B cell (primary cell): ENCODE measurements at regions of chr22 and their contacts with region 1.

Region 1: DNA sequence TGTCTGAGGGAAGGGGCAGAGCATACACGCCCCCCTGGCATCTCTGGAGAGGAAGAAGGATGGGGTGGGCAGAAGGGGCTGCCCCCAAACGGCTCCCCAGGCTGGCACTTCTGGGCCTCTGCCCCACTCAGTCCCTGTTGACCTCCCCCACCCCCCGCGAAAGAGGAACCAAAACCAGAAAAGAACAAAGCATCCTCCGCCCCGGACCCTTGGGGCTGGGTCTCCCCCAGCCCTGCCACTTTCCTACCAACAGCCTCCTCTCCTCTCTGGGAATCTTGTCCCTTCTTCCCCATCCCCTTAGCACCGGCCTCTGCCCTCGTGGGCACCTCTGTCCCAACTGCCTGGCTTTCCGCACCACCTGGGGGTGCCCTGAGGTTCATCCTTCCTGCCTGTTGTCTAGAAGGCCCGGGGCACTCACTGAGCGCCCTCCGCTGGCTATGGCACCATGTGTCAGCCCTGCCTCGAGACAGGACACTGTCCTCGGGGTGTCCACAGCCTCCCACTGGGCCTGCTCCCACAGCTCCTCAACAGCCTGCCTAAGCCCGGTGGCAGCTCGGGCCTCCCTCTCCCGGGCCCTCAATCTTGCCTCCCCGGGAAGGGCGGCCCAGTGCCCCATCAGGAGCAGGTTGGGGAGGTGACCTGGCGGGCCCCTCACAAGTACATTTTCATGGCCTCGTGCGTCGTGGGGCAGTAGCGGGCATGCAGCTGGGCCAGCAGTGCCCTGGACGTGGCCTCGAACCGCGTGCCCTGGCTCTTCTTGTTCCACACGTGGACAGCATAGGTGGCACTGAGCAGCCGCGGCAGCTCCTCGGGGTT is 28.2 kb downstream of the A4GALT start:
- DNase-seq: peak; percentile 77
- ATAC-seq: peak; percentile 86
- H3K4me3 ChIP-seq: peak overlapping the region in 3 of 5 experiments; percentile 15 to 36 (median 28)
- H3K4me3 Mint-ChIP-seq: peak overlapping the region; percentile 83
- H3K27ac ChIP-seq: peak overlapping the region in 1 of 2 donors; percentile 34
- H3K27ac Mint-ChIP-seq: peak overlapping the region; percentile 91
- H3K4me1 ChIP-seq: peaks cover 22 to 32% of the 10 kb centered on the region in 2 donors
- H3K4me1 Mint-ChIP-seq: peaks cover 32% of the 10 kb centered on the region
- H3K27me3 ChIP-seq: no peaks in the 10 kb centered on the region
- H3K27me3 Mint-ChIP-seq: no peaks in the 10 kb centered on the region
- CTCF ChIP-seq: peak; percentile 32

Region 2: DNA sequence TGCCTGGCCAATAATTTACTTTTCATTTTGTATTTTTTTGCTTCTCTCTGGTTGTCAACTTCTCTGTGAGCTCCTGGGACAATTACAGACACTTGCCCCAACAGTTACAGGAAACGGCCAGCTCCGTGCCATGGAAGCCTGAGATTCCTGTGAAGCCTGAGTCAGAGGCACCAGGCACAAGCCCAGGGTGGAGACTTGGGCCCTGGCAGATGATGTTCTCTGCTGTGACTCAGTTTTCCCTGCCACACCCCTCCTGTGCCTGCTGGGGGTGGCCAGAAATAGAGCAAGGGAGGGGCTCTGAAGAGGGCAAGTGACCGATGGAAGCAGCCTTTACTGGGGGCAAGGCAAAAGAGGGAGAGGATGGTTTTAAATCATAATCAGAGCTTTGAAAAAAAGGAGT is 56.9 kb before region 1 on chr22:
- CTCF ChIA-PET with region 1: no interaction called
- POLR2A ChIA-PET with region 1: interaction called, 10 read pairs
- intact Hi-C with region 1: no loop called
- DNase-seq: no peak
- ATAC-seq: no peak
- H3K4me3 ChIP-seq: no peak overlapping the region
- H3K4me3 Mint-ChIP-seq: no peak overlapping the region
- H3K27ac ChIP-seq: no peak overlapping the region
- H3K27ac Mint-ChIP-seq: no peak overlapping the region
- H3K4me1 ChIP-seq: peaks cover 4 to 8% of the 10 kb centered on the region in 2 donors
- H3K4me1 Mint-ChIP-seq: peaks cover 13% of the 10 kb centered on the region
- H3K27me3 ChIP-seq: no peaks in the 10 kb centered on the region
- H3K27me3 Mint-ChIP-seq: no peaks in the 10 kb centered on the region
- CTCF ChIP-seq: no peak